A673 (cell line): ENCODE measurements at regions of chr12 and their contacts with region 1.

Region 1: DNA sequence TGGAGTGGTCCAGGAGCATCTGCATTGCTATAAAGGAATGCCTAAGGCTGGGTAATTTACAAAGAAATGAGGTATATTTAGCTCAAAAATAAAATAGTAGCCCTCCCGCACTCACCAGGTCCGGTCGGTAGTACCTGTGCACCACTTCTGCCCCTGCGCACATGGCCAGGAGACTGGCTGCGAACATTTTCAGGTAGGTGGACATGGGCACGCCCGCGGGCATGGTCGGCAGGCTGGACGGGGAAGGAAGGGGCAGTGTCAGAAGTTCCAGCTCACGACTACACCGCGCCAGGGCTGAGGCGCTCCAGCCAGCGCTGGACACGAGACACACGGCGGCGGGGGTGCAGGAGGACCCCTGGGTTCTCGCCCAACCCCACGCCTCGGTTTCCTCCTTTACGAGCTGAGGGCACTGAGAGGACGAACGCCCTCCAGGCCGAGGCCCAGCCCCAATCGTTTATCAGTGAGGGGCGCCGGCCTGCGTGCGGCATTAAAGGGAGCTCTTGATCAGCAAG is 9.1 kb upstream of the TDG start:
- DNase-seq: no peak
- H3K4me3 ChIP-seq: peak overlapping the region; percentile 96
- H3K27ac ChIP-seq: peak overlapping the region; percentile 91
- H3K4me1 ChIP-seq: peaks cover 4% of the 10 kb centered on the region
- H3K27me3 ChIP-seq: no peaks in the 10 kb centered on the region
- CTCF ChIP-seq: no peak

Region 2: DNA sequence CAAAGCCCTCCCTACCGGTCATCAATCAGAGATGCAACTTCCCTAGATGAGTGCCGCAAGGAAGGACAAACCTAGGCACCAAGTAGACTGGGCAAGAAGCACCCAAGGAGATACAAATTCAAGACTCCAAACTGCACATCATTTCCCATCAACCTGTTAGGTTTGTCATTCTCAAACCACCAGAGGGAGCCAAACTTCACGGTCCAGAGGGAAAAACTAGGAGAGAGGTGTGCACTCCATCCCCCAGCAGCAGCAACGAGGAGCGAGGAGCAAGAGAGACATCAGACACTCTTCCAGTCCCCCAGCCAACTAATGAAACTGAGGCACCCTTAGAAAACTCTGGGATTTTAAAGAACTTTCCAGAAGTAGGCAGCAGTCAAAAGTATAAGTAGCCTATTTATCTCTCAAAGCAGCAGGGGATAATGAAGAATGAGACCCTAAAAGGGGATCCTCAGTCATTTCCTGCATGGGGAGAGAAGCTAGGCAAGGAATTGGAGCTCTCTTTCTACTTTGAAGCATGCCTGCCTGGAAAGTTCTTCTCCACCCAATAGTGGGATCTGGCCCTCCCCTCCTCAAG is 78.5 kb before region 1 on chr12:
- CTCF ChIA-PET with region 1: no interaction called
- POLR2A ChIA-PET with region 1: no interaction called
- intact Hi-C with region 1: no loop called
- DNase-seq: peak; percentile 84
- H3K4me3 ChIP-seq: no peak overlapping the region
- H3K27ac ChIP-seq: no peak overlapping the region
- H3K4me1 ChIP-seq: no peaks in the 10 kb centered on the region
- H3K27me3 ChIP-seq: no peaks in the 10 kb centered on the region
- CTCF ChIP-seq: peak; percentile 84

Region 3: DNA sequence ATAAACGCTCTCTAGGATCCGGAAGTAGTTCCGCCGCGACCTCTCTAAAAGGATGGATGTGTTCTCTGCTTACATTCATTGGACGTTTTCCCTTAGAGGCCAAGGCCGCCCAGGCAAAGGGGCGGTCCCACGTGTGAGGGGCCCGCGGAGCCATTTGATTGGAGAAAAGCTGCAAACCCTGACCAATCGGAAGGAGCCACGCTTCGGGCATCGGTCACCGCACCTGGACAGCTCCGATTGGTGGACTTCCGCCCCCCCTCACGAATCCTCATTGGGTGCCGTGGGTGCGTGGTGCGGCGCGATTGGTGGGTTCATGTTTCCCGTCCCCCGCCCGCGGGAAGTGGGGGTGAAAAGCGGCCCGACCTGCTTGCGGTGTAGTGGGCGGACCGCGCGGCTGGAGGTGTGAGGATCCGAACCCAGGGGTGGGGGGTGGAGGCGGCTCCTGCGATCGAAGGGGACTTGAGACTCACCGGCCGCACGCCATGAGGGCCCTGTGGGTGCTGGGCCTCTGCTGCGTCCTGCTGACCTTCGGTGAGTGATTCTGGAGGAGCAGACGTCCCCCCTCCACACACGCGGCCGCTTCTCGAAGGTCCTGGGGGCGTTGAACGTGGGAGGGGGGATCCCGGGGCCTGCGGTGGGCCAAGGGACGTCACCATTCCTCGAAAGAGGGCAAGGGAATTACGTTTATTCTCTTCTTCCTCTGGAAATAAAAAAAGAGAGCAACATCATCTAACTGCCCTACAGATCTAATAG is 26.4 kb before region 1 on chr12 and contains the start of gene HSP90B1:
- CTCF ChIA-PET with region 1: no interaction called
- POLR2A ChIA-PET with region 1: no interaction called
- intact Hi-C with region 1: loop called (anchors 2 kb)
- DNase-seq: peak; percentile 100
- H3K4me3 ChIP-seq: peak within 1 kb of the TSS; percentile 83
- H3K27ac ChIP-seq: peak within 1 kb of the TSS; percentile 96
- H3K4me1 ChIP-seq: peaks cover 31% of the 10 kb centered on the region
- H3K27me3 ChIP-seq: no peaks in the 10 kb centered on the region
- CTCF ChIP-seq: no peak
- total RNA-seq, gene HSP90B1: 955 and 970 TPM in 2 replicates